Dendritic cell treated with granulocyte-macrophage colony-stimulating factor and Interleukin-4, amounts not matched to agents 40 ng/mL and 50 ng/mL, for 4 days (primary cell): ENCODE measurements at regions of chr2 and their contacts with region 1.

Region 1: DNA sequence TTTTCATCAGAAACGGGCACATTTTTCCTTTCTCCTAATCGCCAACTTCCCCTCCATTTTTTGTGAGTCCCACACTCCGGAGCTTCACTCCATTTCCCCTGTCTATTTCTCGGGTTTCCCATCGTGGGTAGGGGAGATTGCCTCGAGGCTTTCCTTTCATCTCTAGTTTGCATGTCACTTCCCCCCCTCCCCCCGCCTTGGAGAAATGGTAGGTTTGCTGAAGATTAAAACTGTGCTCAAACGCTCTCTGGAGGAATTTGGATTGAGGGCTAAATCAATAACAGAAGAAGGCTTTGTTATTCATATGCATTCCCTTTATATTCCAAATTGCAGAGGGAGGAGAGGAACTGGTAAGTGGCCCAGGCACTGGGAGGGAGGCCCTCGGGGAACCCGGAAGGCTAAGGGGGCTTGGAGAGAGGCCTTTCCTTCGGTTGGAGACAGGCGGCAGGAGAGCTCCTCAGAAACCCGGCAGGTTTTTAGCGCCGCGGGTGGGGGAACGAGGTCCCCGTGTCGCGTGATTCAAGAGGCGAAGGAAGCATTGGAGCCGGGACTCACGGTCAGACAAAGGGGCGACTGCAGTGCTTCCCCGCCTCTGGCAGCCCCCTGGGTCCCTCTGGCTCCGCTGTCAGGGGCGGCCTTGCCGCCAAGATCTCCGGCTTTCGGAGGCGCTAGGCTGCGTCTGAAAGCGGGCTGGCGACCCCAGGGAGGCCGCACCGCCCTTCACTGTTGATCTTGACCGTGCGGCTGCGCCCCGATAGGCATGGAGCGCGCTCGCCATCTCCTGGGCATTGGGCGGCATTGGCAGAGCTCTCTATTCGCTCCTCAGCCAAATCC is 2.4 kb upstream of the HOXD12 start:
- H3K4me3 Mint-ChIP-seq: peak overlapping the region; percentile 71
- H3K27ac Mint-ChIP-seq: no peak overlapping the region
- H3K4me1 Mint-ChIP-seq: peaks cover 31% of the 10 kb centered on the region
- H3K27me3 Mint-ChIP-seq: peaks cover 94% of the 10 kb centered on the region

Region 2: GRCh38 chr2:175251425-175252041 is 845.7 kb before region 1 on chr2:
- intact Hi-C with region 1: loop called (anchors 1 kb)
- H3K4me3 Mint-ChIP-seq: no peak overlapping the region
- H3K27ac Mint-ChIP-seq: no peak overlapping the region
- H3K4me1 Mint-ChIP-seq: no peaks in the 10 kb centered on the region
- H3K27me3 Mint-ChIP-seq: peaks cover 21% of the 10 kb centered on the region

Region 3: GRCh38 chr2:175366815-175367214 is 730.4 kb before region 1 on chr2:
- intact Hi-C with region 1: loop called (anchors 2 kb)
- H3K4me3 Mint-ChIP-seq: no peak overlapping the region
- H3K27ac Mint-ChIP-seq: no peak overlapping the region
- H3K4me1 Mint-ChIP-seq: peaks cover 7% of the 10 kb centered on the region
- H3K27me3 Mint-ChIP-seq: peaks cover 21% of the 10 kb centered on the region

Region 4: DNA sequence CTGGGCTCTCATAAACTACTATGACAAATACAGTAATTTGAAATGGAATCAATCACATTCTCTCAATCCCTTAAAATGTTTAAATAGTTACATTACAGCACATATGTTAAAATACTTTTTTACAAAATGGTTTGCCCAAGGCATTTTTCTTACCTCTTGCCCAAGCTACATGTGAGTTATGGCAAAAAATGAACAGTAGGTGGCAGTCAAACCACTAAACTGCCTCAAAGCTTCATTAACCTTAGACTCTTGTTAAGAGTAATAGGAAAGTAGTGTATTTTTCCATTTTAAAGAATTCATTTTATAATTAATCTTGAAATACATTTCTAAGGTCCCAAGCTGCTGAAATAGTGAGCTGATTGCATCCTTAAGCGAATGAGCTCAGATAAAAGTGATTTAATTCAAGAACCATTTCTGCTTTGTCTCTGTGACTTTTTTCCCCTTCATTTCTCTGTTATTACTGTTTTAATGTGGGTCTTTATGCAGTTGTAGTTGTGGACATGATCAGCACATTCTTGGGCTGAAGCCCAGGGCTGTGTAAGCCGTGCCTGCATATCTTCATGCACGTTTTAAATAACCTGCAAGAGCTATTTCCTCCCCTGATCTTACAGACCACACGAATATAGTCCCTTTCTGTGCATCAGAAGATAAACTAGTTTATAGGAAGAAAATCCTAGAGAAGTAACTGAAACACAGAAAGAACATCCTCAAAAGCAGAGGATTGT is 406.9 kb before region 1 on chr2:
- intact Hi-C with region 1: loop called (anchors 1 kb)
- H3K4me3 Mint-ChIP-seq: no peak overlapping the region
- H3K27ac Mint-ChIP-seq: no peak overlapping the region
- H3K4me1 Mint-ChIP-seq: no peaks in the 10 kb centered on the region
- H3K27me3 Mint-ChIP-seq: peaks cover 7% of the 10 kb centered on the region

Region 5: DNA sequence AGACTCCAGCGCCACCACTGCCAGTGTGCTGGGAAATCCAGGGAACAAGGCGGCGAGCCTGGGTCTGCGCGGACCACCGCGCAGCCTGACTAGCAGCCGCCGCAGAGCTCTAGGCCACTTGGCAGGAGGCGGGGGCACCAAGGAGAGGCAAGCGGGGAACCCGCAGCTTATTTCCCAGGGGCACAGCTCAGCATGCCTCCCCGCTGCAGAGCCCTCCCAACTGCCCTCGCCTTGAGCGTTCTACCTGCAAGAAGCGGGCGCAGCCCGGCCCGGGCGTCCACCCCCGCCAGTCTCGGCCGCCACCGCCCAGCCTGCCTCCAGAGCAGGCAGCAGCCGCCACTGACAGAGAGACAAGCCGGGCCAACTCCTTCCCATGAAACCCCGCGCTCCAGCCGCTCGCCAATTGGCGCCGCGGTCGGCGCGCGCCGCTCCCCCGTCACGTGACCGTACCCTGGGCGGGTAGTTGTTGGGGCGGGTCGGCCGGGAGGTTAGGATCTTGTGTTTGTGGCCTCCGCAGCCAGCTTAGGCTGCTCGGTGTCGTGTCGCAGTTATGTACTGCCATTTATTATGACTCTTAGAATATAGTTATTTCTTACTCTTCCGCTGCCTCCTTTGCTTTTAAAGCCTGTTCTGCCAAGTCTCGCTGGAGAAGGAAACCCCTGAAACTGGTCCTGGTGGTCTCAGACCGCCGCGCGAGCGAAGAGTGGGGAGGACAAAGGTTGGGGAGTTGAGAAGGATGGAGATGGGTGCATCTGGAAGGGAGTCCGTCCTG is 95.1 kb before region 1 on chr2 and contains the start of gene LNPK:
- intact Hi-C with region 1: loop called (anchors 10 kb)
- H3K4me3 Mint-ChIP-seq: peak within 1 kb of the TSS; percentile 81
- H3K27ac Mint-ChIP-seq: peak within 1 kb of the TSS; percentile 88
- H3K4me1 Mint-ChIP-seq: peaks cover 24% of the 10 kb centered on the region
- H3K27me3 Mint-ChIP-seq: peaks cover 15% of the 10 kb centered on the region

Region 6: GRCh38 chr2:176464886-176465564 is 367.8 kb after region 1 on chr2:
- intact Hi-C with region 1: no loop called
- H3K4me3 Mint-ChIP-seq: no peak overlapping the region
- H3K27ac Mint-ChIP-seq: no peak overlapping the region
- H3K4me1 Mint-ChIP-seq: no peaks in the 10 kb centered on the region
- H3K27me3 Mint-ChIP-seq: peaks cover 28% of the 10 kb centered on the region